IMR-90 (cell line): ENCODE measurements at regions of chr10 and their contacts with region 1.

Region 1: DNA sequence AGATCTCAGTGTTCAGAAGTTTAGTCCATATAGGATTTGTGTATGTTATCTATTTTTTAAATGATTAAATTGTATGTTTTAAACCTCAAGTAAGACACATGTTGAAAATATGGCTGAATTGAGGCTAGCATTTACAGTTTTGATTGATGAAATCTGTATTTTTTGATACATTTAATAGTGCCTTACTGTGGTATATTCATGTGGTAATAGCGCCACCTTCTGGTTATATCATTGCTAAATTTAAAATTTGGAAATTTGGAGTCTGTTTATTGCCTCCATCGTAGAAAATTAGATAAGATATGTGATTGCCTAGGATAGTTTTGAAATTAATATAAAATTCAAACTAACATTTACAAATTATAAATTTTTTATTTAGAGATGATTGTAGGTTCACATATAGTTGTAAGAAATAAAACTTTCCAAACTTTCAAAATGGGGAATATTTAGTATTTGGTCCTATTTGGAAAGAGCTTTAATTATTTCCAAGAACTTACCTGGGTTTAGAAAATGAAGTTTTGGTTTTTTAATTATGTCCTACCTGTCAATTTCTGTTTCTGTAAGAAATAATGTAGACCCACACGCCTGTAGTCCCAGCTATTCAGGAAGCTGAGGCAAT is 19.1 kb upstream of the ARMS2 start:
- DNase-seq: peak; percentile 55
- ATAC-seq: peak; percentile 46
- H3K4me3 ChIP-seq: no peak overlapping the region
- H3K27ac ChIP-seq: no peak overlapping the region
- H3K4me1 ChIP-seq: no peaks in the 10 kb centered on the region
- H3K27me3 ChIP-seq: no peaks in the 10 kb centered on the region
- CTCF ChIP-seq: peak; percentile 78
- POLR2A ChIP-seq: no peak
- RAD21 ChIP-seq: peak; percentile 85

Region 2: GRCh38 chr10:121615435-121615793 is 819.9 kb before region 1 on chr10:
- CTCF ChIA-PET with region 1: no interaction called
- POLR2A ChIA-PET with region 1: no interaction called
- dilution Hi-C with region 1: no loop called
- in situ Hi-C with region 1: no loop called
- intact Hi-C with region 1: no loop called
- DNase-seq: no peak
- ATAC-seq: no peak
- H3K4me3 ChIP-seq: no peak overlapping the region
- H3K27ac ChIP-seq: no peak overlapping the region
- H3K4me1 ChIP-seq: no peaks in the 10 kb centered on the region
- H3K27me3 ChIP-seq: no peaks in the 10 kb centered on the region
- CTCF ChIP-seq: no peak
- POLR2A ChIP-seq: no peak
- RAD21 ChIP-seq: no peak

Region 3: DNA sequence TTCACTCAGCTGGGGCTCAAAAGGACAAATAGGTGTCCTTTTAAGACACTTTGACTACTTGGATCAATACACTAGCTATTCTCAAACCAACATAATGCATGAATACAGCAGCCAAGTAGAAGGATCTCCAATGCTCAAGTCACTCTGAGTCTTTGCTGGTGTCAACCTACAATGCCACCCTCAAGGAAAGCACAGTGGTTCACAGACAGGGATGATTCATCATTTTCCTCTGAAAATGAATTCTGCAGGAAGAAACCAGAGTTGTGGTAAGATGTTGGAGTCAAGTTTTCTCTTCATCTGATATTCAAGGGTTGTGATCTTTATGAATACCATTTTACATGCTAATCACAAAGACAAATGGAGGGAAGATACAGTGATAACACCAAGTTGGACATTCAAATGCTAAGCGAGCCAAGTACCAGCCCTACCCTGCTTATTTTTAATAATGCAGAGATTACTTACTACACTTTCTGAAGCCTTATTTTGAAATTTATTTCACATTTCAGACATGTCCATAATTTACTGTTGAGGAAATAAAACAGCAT is 694.0 kb before region 1 on chr10:
- CTCF ChIA-PET with region 1: no interaction called
- POLR2A ChIA-PET with region 1: no interaction called
- dilution Hi-C with region 1: no loop called
- in situ Hi-C with region 1: no loop called
- intact Hi-C with region 1: no loop called
- DNase-seq: peak; percentile 5
- ATAC-seq: no peak
- H3K4me3 ChIP-seq: no peak overlapping the region
- H3K27ac ChIP-seq: no peak overlapping the region
- H3K4me1 ChIP-seq: no peaks in the 10 kb centered on the region
- H3K27me3 ChIP-seq: peaks cover 3% of the 10 kb centered on the region
- CTCF ChIP-seq: no peak
- POLR2A ChIP-seq: no peak
- RAD21 ChIP-seq: no peak

Region 4: GRCh38 chr10:122298598-122299301 is 136.6 kb before region 1 on chr10:
- CTCF ChIA-PET with region 1: interaction called, 18 read pairs
- POLR2A ChIA-PET with region 1: no interaction called
- dilution Hi-C with region 1: no loop called
- in situ Hi-C with region 1: loop called (anchors 5 kb)
- intact Hi-C with region 1: loop called (anchors 1 kb)
- DNase-seq: peak; percentile 72
- ATAC-seq: peak; percentile 99
- H3K4me3 ChIP-seq: no peak overlapping the region
- H3K27ac ChIP-seq: no peak overlapping the region
- H3K4me1 ChIP-seq: peaks cover 5% of the 10 kb centered on the region
- H3K27me3 ChIP-seq: peaks cover 15% of the 10 kb centered on the region; the same call in 1 of the 2 replicates
- CTCF ChIP-seq: peak; percentile 95
- POLR2A ChIP-seq: 0 out of 2 replicates have a peak, but pooled peaks have one; percentile 34
- RAD21 ChIP-seq: peak; percentile 98

Region 5: GRCh38 chr10:122461367-122461728 is 26.0 kb after region 1 on chr10 and contains the start of gene HTRA1:
- CTCF ChIA-PET with region 1: no interaction called
- POLR2A ChIA-PET with region 1: no interaction called
- dilution Hi-C with region 1: no loop called
- in situ Hi-C with region 1: no loop called
- intact Hi-C with region 1: no loop called
- DNase-seq: peak; percentile 61
- ATAC-seq: peak; percentile 82
- H3K4me3 ChIP-seq: peak within 1 kb of the TSS; percentile 52
- H3K27ac ChIP-seq: peak within 1 kb of the TSS; percentile 34
- H3K4me1 ChIP-seq: peaks cover 12% of the 10 kb centered on the region
- H3K27me3 ChIP-seq: peaks cover 2% of the 10 kb centered on the region
- CTCF ChIP-seq: no peak
- POLR2A ChIP-seq: no peak
- RAD21 ChIP-seq: no peak
- total RNA-seq, gene HTRA1: 23.1 and 28.5 TPM in 2 replicates